ENCODE measurements at regions of chr2 and their contacts with region 1.

Region 1: GRCh38 chr2:226799181-226799975 is at the start of gene IRS1:
- DNase-seq: peak in 1 of 2 donors; percentile 85
- H3K4me3 ChIP-seq: peak within 1 kb of the TSS; percentile 75 to 86
- H3K27ac ChIP-seq: peak within 1 kb of the TSS; percentile 94 to 95
- H3K4me1 ChIP-seq: peaks cover 14 to 35% of the 10 kb centered on the region in 2 donors
- H3K27me3 ChIP-seq: no peaks in the 10 kb centered on the region
- CTCF ChIP-seq: no peak
- total RNA-seq, gene IRS1: 18.6 TPM

Region 2: DNA sequence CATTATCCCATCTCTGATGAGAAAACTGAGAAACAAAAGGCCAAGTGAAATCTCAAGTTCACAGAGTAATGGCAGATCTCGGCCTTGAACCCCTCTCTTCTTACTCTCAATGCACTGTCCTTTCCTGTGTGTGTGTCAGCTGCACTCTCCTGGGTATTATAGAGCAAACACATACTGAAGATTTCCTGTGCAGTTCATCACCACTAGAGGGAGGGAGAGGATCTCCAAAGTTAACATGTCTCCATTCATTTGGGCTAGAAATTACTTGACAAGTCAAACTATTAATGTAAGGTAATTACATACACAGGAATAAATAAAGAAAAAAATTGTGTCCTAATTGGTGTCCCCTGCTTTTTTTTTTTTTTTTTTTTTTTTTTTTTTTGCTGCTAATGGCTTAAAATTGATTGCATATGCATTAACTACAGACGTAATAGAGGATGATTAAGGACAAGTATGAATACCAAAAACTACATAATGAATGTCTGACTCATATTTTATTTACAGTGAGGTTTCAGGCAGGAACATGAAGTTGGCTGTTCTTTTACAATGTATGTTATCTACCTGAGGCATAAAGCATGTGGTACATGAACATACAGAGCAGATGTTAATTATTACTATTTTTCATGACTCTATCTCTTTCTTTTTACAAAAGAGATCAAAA is 1130.6 kb before region 1 on chr2:
- intact Hi-C with region 1: loop called (anchors 2 kb)
- DNase-seq: no peak
- H3K4me3 ChIP-seq: no peak overlapping the region
- H3K27ac ChIP-seq: no peak overlapping the region
- H3K4me1 ChIP-seq: no peaks in the 10 kb centered on the region
- H3K27me3 ChIP-seq: no peaks in the 10 kb centered on the region
- CTCF ChIP-seq: peak; percentile 14 to 60 (median 46)

Region 3: DNA sequence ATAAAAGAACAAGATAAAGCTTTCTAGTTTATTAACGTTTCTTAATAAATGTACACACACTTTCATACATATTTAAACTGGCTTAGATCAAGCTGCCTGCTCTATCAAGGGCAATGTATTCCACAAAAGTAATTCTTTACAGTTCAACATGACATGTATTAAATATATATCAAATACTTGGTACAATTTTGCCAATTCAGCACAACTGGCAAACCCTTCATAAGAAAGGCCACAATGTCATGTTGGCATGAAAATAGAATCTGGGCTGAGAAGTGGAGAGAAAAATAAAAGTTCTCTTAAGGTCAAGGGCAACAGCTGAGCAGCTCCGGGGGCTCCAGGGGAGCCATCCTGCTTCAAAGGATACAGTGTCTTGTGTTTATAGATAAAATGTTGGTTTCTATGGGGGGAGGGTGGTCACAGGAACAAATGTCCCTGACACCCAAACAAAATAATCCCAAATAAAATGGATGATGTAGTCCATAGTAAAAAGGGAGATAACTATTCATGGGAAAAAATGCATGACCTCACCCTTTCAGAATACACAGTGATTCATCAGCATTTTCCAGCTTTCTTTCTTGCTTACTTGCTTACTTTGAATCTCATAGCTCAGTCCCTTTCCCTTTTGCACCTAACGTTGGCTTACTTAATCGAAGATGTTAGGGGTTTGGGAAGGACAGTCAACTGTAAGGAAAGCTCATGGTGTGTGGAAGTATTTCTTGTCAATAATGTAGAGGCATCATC is 905.0 kb before region 1 on chr2:
- intact Hi-C with region 1: loop called (anchors 2 kb)
- DNase-seq: no peak
- H3K4me3 ChIP-seq: no peak overlapping the region
- H3K27ac ChIP-seq: no peak overlapping the region
- H3K4me1 ChIP-seq: peaks cover 0 to 6% of the 10 kb centered on the region in 2 donors
- H3K27me3 ChIP-seq: no peaks in the 10 kb centered on the region
- CTCF ChIP-seq: no peak

Region 4: GRCh38 chr2:226169751-226170581 is 629.4 kb before region 1 on chr2:
- intact Hi-C with region 1: no loop called
- DNase-seq: no peak
- H3K4me3 ChIP-seq: no peak overlapping the region
- H3K27ac ChIP-seq: no peak overlapping the region
- H3K4me1 ChIP-seq: no peaks in the 10 kb centered on the region
- H3K27me3 ChIP-seq: no peaks in the 10 kb centered on the region
- CTCF ChIP-seq: no peak

Region 5: DNA sequence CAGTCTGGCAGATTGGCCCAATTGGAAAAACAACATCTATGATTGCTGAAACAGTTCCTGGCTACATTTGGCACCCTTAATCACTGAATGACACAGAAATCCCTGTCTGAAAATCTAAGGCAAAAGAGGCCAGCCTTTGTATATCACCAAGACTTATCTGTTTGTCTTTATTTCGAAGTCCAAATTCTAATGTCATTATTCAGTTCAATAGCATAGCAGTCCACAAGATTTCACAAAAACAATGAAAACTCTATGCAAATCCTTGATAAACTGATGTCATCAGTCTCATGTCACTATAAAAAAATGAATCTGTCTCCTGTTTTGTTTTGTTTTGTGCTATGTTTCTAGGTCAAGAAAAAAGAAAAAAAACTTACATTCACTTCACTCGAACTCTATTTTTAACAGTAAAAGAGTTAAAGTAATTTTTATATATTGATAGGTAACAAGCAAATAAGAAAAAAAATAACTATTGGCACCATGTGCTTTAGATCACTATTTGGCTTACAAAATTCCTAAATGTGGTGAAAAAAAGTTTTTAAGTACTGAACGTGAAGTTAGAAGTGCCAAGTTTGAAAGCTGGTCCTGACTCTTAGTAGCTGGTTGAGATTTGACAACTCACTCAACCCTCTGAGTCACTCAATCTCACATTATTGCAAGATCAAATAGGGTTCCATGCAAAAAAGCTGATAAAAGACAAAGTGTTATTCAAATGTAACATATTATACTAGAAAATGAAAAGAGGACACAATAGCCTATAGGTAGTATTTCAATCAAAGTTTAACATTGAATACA is 359.1 kb before region 1 on chr2:
- intact Hi-C with region 1: loop called (anchors 5 kb)
- DNase-seq: no peak
- H3K4me3 ChIP-seq: no peak overlapping the region
- H3K27ac ChIP-seq: peak overlapping the region; percentile 46 to 57
- H3K4me1 ChIP-seq: peaks cover 0 to 8% of the 10 kb centered on the region in 2 donors
- H3K27me3 ChIP-seq: no peaks in the 10 kb centered on the region
- CTCF ChIP-seq: no peak

Region 6: DNA sequence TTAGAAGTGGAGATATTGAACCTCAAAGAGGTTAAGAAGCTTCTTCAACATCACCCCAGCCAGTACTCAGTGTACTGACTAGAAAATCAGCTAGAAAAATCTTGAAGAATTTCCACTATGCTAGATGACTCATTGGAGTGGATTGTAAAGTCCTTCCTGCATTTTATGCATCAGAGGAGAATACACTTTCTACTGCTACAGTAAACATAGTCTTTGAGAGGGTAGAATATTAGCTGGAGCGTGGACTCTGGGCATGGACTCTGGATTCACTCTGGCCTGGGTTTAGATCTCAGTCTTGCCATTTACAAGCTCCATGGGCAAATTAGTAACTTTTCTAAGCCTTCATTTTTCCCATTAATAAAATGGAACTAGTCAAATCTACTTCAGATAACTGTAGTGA is 215.7 kb before region 1 on chr2:
- intact Hi-C with region 1: loop called (anchors 5 kb)
- DNase-seq: no peak
- H3K4me3 ChIP-seq: no peak overlapping the region
- H3K27ac ChIP-seq: no peak overlapping the region
- H3K4me1 ChIP-seq: peaks cover 0 to 5% of the 10 kb centered on the region in 2 donors
- H3K27me3 ChIP-seq: no peaks in the 10 kb centered on the region
- CTCF ChIP-seq: no peak

Region 7: DNA sequence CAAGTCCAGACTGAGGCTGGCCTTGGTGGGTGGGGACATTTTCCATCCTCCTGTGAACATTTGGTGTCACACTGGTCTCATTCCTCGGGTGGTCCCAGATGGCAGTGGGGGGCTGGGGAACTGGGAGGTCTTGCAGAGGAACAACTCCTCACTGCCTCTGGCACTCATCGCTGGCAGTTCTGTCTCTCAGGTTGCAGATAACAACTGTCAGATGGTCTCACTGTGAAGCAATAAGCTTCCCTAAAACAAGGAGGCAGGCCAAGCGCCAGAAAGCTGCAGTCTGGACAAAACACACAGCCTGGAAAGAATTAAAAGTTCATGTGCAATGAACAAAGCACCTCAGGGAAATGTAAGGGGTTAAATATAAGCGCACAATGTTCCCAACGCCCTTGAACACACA is 77.8 kb before region 1 on chr2:
- intact Hi-C with region 1: loop called (anchors 2 kb)
- DNase-seq: no peak
- H3K4me3 ChIP-seq: no peak overlapping the region
- H3K27ac ChIP-seq: no peak overlapping the region
- H3K4me1 ChIP-seq: peaks cover 0 to 6% of the 10 kb centered on the region in 2 donors
- H3K27me3 ChIP-seq: no peaks in the 10 kb centered on the region
- CTCF ChIP-seq: no peak

Region 8: GRCh38 chr2:226835796-226836547 is 36.6 kb after region 1 on chr2 and contains the start of gene RHBDD1:
- intact Hi-C with region 1: loop called (anchors 2 kb)
- DNase-seq: peak; percentile 72 to 96
- H3K4me3 ChIP-seq: peak within 1 kb of the TSS; percentile 89 to 96
- H3K27ac ChIP-seq: peak within 1 kb of the TSS; percentile 98 to 99
- H3K4me1 ChIP-seq: peaks cover 2 to 10% of the 10 kb centered on the region in 2 donors
- H3K27me3 ChIP-seq: no peaks in the 10 kb centered on the region
- CTCF ChIP-seq: peak in 2 of 3 experiments; percentile 1 to 4
- total RNA-seq, gene RHBDD1: 3.7 TPM